ENCODE measurements at regions of chr5 and their contacts with region 1.

Region 1: DNA sequence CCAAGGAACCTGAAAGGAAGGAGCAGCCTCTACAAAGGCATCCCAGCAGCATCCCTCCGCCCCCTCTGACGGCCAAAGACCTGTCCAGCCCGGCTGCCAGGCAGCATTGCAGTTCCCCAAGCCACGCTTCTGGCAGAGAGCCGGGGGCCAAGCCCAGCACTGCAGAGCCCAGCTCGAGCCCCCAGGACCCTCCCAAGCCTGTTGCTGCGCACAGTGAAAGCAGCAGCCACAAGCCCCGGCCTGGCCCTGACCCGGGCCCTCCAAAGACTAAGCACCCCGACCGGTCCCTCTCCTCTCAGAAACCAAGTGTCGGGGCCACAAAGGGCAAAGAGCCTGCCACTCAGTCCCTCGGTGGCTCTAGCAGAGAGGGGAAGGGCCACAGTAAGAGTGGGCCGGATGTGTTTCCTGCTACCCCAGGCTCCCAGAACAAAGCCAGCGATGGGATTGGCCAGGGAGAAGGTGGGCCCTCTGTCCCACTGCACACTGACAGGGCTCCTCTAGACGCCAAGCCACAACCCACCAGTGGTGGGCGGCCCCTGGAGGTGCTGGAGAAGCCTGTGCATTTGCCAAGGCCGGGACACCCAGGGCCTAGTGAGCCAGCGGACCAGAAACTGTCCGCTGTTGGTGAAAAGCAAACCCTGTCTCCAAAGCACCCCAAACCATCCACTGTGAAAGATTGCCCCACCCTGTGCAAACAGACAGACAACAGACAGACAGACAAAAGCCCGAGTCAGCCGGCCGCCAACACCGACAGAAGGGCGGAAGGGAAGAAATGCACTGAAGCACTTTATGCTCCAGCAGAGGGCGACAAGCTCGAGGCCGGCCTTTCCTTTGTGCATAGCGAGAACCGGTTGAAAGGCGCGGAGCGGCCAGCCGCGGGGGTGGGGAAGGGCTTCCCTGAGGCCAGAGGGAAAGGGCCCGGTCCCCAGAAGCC is 30.8 kb downstream of the CD180 start:
- DNase-seq: peak; percentile 93

Region 2: DNA sequence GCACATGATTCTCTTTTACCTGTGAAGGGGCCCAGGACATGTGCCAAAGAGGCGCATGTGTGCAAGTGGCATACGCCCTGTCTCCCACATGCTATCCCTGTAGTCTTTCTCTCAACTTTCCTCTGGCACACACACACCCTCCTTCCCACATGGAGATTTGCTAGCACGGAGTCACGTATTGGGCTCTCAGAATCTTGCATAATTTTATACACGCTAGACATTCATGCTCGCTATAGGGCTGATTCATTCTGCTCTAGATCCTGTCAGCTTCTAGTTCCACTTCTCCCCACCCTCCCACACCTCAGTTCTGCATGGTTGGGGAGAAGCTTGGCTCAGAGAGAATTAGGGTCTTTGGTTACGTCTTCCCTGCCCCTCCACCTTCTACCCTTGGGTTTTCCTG is 42.0 kb before region 1 on chr5:
- intact Hi-C with region 1: no loop called
- DNase-seq: no peak

Region 3: GRCh38 chr5:67209142-67209771 is 43.5 kb after region 1 on chr5:
- intact Hi-C with region 1: loop called (anchors 2 kb)
- DNase-seq: no peak

Region 4: GRCh38 chr5:67246108-67246507 is 80.3 kb after region 1 on chr5:
- intact Hi-C with region 1: no loop called
- DNase-seq: no peak

Measured in cardiac septum (tissue), 1 donor.